ENCODE measurements at regions of chr11 and their contacts with region 1.

Region 1: DNA sequence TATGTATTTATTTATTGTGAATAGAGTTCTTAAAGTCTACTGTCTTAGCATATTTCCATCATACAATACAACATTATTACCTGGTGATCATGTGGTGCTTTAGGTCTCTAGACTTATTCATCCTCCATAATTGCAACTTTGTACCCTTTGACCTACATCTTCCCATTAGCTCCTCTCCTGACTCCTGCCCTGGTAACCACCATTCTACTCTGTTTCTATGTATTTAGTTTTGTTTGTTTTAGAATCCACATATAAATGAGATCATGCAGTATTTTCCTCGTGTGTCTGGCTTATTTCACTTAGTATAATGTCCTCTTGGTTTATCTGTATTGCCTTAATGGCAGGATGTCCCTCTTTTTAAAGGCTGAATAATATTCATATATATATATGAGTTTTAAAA is 22.7 kb downstream of the NCAM1 start:
- DNase-seq: no peak
- ATAC-seq: no peak
- H3K4me3 ChIP-seq: no peak overlapping the region
- H3K27ac ChIP-seq: no peak overlapping the region
- H3K4me1 ChIP-seq: peaks cover 0 to 13% (median 0%) of the 10 kb centered on the region in 12 donors
- H3K27me3 ChIP-seq: no peaks in the 10 kb centered on the region
- CTCF ChIP-seq: no peak
- POLR2A ChIP-seq: no peak

Region 2: GRCh38 chr11:112605093-112605666 is 378.7 kb before region 1 on chr11:
- intact Hi-C with region 1: no loop called
- DNase-seq: no peak
- ATAC-seq: no peak
- H3K4me3 ChIP-seq: no peak overlapping the region
- H3K27ac ChIP-seq: no peak overlapping the region
- H3K4me1 ChIP-seq: peaks cover 0 to 9% (median 0%) of the 10 kb centered on the region in 12 donors
- H3K27me3 ChIP-seq: no peaks in the 10 kb centered on the region
- CTCF ChIP-seq: no peak
- POLR2A ChIP-seq: no peak

Region 3: DNA sequence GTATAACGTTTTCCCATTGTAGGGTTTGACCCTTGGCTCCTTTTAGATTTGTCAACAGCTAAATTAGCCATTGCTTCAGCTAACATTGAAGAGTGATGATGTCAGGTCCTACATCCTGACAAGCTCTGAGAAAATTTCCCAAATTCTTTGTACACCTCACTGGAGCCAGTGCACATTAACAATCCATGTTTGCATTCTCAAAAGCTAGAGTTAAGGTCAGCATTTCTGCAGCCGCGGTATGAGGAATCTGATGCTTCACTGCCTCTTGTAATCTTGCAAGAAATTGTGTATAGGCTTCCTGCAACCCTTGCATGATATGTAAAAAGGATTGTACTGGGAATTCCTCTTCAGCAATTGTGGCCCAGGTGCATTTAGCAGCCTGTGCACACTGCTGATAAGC is 55.8 kb before region 1 on chr11:
- intact Hi-C with region 1: loop called in 1 of 10 experiments (anchors 10 kb)
- DNase-seq: no peak
- ATAC-seq: no peak
- H3K4me3 ChIP-seq: no peak overlapping the region
- H3K27ac ChIP-seq: no peak overlapping the region
- H3K4me1 ChIP-seq: peaks cover 0 to 4% (median 0%) of the 10 kb centered on the region in 12 donors
- H3K27me3 ChIP-seq: no peaks in the 10 kb centered on the region
- CTCF ChIP-seq: no peak
- POLR2A ChIP-seq: no peak

Region 4: GRCh38 chr11:113082341-113082955 is 98.6 kb after region 1 on chr11:
- intact Hi-C with region 1: no loop called
- DNase-seq: no peak
- ATAC-seq: no peak
- H3K4me3 ChIP-seq: no peak overlapping the region
- H3K27ac ChIP-seq: no peak overlapping the region
- H3K4me1 ChIP-seq: peaks cover 0 to 19% (median 0%) of the 10 kb centered on the region in 12 donors
- H3K27me3 ChIP-seq: no peaks in the 10 kb centered on the region
- CTCF ChIP-seq: no peak
- POLR2A ChIP-seq: no peak

Region 5: GRCh38 chr11:113137713-113138529 is 154.0 kb after region 1 on chr11:
- intact Hi-C with region 1: no loop called
- DNase-seq: no peak
- ATAC-seq: no peak
- H3K4me3 ChIP-seq: no peak overlapping the region
- H3K27ac ChIP-seq: no peak overlapping the region
- H3K4me1 ChIP-seq: peaks cover 0 to 10% (median 0%) of the 10 kb centered on the region in 12 donors
- H3K27me3 ChIP-seq: no peaks in the 10 kb centered on the region
- CTCF ChIP-seq: no peak
- POLR2A ChIP-seq: no peak

Measured in heart left ventricle (tissue), 16 donors.